ENCODE measurements at regions of chr6 and their contacts with region 1.

Region 1: GRCh38 chr6:57172136-57173055 is at the start of gene BAG2:
- DNase-seq: peak; percentile 92
- H3K4me3 Mint-ChIP-seq: peak within 1 kb of the TSS; percentile 90
- H3K27ac Mint-ChIP-seq: peak within 1 kb of the TSS; percentile 87
- H3K4me1 Mint-ChIP-seq: peaks cover 20% of the 10 kb centered on the region
- H3K27me3 Mint-ChIP-seq: no peaks in the 10 kb centered on the region
- total RNA-seq, gene BAG2: 6.8 to 7.2 TPM

Region 2: GRCh38 chr6:56955171-56956045 is 217.0 kb before region 1 on chr6:
- CTCF ChIA-PET with region 1: no interaction called
- POLR2A ChIA-PET with region 1: no interaction called
- intact Hi-C with region 1: loop called (anchors 2 kb)
- DNase-seq: peak; percentile 81
- H3K4me3 Mint-ChIP-seq: peak overlapping the region; percentile 72
- H3K27ac Mint-ChIP-seq: no peak overlapping the region
- H3K4me1 Mint-ChIP-seq: peaks cover 21% of the 10 kb centered on the region
- H3K27me3 Mint-ChIP-seq: peaks cover 45% of the 10 kb centered on the region

Region 3: DNA sequence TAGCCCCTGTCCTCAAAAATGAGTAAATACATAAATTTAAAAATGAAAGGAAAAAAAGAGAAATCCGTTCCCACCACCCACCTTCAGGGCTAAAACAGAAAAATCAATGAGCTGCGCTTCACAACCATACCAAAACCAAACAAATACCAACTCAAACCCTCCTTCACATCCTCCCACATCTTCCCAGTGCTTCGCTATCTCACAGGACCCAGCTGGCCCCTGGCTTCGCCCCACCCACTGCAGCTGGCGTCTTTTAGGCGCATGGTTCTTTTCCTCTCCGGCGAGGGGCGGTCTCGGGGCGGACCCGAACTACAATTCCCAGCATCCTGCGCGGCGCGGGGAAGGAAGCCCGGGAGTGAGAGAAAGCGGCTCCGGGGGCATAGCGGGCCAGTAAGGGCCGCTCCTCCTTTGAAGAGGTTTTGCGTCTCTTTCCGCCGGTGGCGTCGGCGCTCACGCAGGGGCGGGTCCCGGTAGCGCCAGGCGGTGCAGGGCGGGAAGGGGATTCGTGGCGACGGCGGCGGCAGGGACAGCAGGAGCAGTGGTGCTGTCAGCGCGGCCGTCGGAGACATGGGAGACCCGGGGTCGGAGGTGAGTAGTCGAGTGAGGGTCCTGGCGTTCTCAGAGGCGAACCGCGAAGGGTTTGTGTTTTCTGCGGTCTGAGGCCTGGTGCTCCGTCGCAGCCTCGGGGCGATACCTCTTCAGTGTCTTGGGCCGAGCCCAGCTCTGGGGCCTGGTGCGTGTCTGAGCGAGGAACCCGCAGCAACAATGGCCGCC is 82.5 kb before region 1 on chr6 and contains the start of gene ZNF451:
- CTCF ChIA-PET with region 1: interaction called, 3 read pairs
- POLR2A ChIA-PET with region 1: interaction called, 11 read pairs
- intact Hi-C with region 1: loop called (anchors 1 kb)
- DNase-seq: peak; percentile 99
- H3K4me3 Mint-ChIP-seq: peak within 1 kb of the TSS; percentile 85
- H3K27ac Mint-ChIP-seq: peak within 1 kb of the TSS; percentile 92
- H3K4me1 Mint-ChIP-seq: peaks cover 30% of the 10 kb centered on the region
- H3K27me3 Mint-ChIP-seq: no peaks in the 10 kb centered on the region
- total RNA-seq, gene ZNF451: 38.2 to 41.4 TPM

Region 4: DNA sequence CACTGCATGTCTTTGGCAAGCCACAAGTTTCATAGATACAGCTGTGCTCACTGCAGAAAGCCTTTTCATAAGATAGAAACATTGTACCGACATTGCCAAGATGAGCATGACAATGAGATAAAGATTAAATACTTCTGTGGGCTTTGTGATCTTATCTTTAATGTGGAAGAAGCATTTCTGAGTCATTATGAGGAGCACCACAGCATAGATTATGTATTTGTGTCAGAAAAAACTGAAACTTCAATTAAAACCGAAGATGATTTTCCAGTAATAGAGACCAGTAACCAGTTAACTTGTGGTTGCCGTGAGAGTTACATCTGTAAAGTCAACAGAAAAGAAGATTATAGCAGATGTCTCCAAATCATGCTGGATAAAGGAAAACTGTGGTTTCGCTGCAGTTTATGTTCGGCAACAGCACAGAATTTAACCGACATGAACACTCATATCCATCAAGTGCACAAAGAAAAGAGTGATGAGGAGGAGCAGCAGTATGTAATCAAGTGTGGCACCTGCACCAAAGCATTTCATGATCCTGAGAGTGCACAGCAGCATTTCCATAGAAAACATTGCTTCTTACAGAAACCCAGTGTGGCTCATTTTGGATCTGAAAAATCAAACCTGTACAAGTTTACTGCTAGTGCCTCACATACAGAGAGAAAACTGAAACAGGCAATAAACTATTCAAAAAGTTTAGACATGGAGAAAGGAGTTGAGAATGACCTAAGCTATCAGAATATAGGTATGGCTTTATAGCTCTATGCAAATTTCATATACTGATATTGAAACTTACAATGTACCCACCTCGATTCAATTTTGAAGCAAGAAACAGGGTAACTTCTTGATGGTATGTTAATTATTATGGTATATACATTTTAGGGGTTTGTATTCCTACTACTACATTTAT is 24.2 kb before region 1 on chr6:
- CTCF ChIA-PET with region 1: no interaction called
- POLR2A ChIA-PET with region 1: interaction called, 4 read pairs
- intact Hi-C with region 1: loop called (anchors 1 kb)
- DNase-seq: peak; percentile 18
- H3K4me3 Mint-ChIP-seq: peak overlapping the region; percentile 30
- H3K27ac Mint-ChIP-seq: peak overlapping the region; percentile 79
- H3K4me1 Mint-ChIP-seq: peaks cover 32% of the 10 kb centered on the region
- H3K27me3 Mint-ChIP-seq: no peaks in the 10 kb centered on the region

Region 5: DNA sequence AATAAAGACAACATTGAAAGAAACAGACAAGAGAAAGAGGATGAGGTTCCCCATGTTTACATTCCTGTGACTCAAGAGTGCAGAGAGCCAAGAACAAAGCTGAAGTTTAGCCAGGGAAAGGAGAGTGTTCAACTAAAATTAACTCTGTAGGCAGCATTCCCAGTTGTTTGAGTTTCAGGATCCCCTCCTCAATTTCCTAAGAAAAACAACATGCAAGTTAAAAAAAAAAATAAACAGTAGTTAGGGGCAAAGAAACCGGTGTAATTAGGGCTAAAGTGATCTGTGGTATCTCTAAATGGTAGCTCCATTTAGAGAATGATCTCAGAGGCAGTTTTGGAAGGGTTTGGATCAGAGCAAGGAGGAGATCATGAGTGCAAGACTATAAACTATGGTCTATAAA is 80.6 kb after region 1 on chr6:
- CTCF ChIA-PET with region 1: no interaction called
- POLR2A ChIA-PET with region 1: no interaction called
- intact Hi-C with region 1: no loop called
- DNase-seq: no peak
- H3K4me3 Mint-ChIP-seq: no peak overlapping the region
- H3K27ac Mint-ChIP-seq: no peak overlapping the region
- H3K4me1 Mint-ChIP-seq: no peaks in the 10 kb centered on the region
- H3K27me3 Mint-ChIP-seq: no peaks in the 10 kb centered on the region

Region 6: GRCh38 chr6:57267586-57268293 is 95.3 kb after region 1 on chr6:
- CTCF ChIA-PET with region 1: no interaction called
- POLR2A ChIA-PET with region 1: no interaction called
- intact Hi-C with region 1: loop called (anchors 5 kb)
- DNase-seq: peak; percentile 50
- H3K4me3 Mint-ChIP-seq: no peak overlapping the region
- H3K27ac Mint-ChIP-seq: no peak overlapping the region
- H3K4me1 Mint-ChIP-seq: peaks cover 11% of the 10 kb centered on the region
- H3K27me3 Mint-ChIP-seq: peaks cover 12% of the 10 kb centered on the region

Measured in activated CD4-positive, alpha-beta memory T cell treated with anti-CD3 and anti-CD28 coated beads for 36 hours (primary cell).